HCT116 (cell line): ENCODE measurements at regions of chr13 and their contacts with region 1.

Region 1: DNA sequence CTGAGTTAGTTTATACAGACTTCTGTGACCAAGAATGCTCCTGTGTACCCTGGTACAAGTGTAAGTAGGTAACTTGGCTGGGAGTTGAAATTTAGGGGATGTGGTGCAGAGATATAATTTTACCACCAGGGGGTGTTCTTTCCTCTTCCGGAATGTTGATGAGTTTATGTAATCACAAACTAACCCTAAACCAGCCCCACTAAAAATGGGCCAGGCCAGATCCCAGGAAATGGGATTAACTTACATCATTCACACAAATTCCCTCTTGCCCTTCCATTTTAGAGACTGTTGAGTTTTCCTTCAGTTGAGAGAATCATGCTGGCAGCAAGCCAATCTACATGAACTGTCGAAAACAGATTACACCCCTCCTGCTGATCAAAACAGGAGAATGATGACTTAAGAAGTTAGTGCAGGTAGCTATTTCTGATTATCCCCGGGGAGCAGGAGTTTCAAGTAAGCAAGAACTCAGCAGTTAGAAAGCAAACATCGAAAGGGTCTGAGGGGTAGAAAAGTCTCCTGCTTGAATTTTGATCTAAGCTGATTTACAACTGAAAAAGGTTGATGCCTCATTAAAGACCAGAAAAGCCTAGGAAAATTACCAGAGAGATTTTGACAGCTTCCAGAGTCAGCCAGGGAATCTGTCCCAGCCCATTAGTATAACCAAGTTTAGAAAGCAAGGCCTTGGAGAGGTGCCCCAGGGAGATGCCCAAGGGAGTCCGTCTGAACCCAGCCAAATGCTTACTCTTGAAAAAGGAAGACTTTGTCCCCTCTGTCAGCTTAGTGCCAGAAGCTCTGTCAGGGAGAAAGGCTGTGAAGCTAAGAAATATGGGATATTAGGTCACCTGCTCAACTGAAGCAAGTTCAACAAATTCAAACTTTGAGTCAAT is 32.3 kb upstream of the MED4 start:
- DNase-seq: peak; percentile 59
- ATAC-seq: peak; percentile 87
- H3K4me3 ChIP-seq: no peak overlapping the region
- H3K27ac ChIP-seq: no peak overlapping the region
- H3K4me1 ChIP-seq: 0 out of 4 replicates have a peak, but pooled peaks cover 0 to 5% of the 10 kb centered on the region in 2 experiments
- H3K27me3 ChIP-seq: no peaks in the 10 kb centered on the region
- CTCF ChIP-seq: peak; percentile 70 to 82 (median 72)
- POLR2A ChIP-seq: no peak
- RAD21 ChIP-seq: peak; percentile 78

Region 2: GRCh38 chr13:47990920-47991466 is 136.2 kb before region 1 on chr13:
- CTCF ChIA-PET with region 1: no interaction called
- POLR2A ChIA-PET with region 1: no interaction called
- RAD21 ChIA-PET with region 1: no interaction called
- intact Hi-C with region 1: no loop called
- DNase-seq: no peak
- ATAC-seq: no peak
- H3K4me3 ChIP-seq: no peak overlapping the region
- H3K27ac ChIP-seq: no peak overlapping the region
- H3K4me1 ChIP-seq: no peaks in the 10 kb centered on the region
- H3K27me3 ChIP-seq: no peaks in the 10 kb centered on the region
- CTCF ChIP-seq: no peak
- POLR2A ChIP-seq: no peak
- RAD21 ChIP-seq: no peak

Region 3: DNA sequence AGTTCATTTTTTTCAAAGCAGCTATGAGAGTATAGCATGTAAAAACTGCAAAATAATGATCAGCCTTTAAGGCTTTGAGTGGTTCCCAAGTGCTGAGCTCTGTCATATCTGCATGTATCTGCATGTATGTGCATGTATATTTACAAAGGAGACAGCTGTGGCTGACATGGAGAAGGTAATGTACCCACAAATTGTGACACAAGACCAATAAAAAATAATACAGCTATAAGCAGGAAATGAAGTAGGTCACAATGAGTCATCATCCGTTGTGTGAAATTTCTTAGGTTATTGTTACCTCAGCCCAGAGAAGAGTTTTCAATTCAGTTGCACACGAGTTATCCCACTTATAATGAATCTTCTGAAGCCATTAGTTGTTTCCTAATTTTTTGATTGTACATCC is 28.7 kb after region 1 on chr13:
- CTCF ChIA-PET with region 1: no interaction called
- POLR2A ChIA-PET with region 1: no interaction called
- RAD21 ChIA-PET with region 1: no interaction called
- intact Hi-C with region 1: no loop called
- DNase-seq: peak; percentile 38
- ATAC-seq: peak; percentile 64
- H3K4me3 ChIP-seq: peak overlapping the region in 1 of 2 experiments; percentile 12; a peak in 1 of 4 replicates
- H3K27ac ChIP-seq: peak overlapping the region; percentile 60
- H3K4me1 ChIP-seq: peaks cover 21 to 36% of the 10 kb centered on the region in 2 experiments
- H3K27me3 ChIP-seq: no peaks in the 10 kb centered on the region
- CTCF ChIP-seq: no peak
- POLR2A ChIP-seq: no peak
- RAD21 ChIP-seq: no peak

Region 4: DNA sequence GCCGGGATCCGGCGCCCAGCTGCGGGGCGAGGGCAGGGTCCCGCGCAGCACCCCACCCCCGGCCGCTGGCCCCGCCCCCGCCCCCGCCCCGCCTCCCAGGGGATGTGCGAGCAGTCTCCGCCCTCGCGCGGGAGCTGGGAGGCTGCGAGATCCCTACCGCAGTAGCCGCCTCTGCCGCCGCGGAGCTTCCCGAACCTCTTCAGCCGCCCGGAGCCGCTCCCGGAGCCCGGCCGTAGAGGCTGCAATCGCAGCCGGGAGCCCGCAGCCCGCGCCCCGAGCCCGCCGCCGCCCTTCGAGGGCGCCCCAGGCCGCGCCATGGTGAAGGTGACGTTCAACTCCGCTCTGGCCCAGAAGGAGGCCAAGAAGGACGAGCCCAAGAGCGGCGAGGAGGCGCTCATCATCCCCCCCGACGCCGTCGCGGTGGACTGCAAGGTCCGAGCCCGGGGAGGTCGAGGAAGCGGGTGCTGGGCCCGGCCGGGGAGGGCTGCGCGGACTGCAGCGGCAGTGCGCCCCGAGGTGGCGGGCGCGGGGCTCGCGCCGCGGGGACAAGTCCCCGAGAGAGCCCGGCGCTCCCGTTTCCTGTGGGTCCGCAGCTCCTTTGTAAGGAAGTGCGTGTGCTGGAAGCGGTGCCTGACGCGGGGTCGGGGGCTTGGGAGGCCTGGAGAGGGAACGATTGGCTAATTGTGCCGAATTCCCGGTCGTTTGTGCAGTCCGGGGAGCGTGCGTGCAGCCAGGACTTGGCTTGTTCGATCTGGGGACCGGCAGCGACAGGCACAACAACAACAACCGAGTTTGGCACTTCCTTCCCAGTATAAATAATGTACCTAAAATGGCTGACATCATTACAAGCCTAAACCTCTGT is 106.1 kb after region 1 on chr13 and contains the start of gene ITM2B:
- CTCF ChIA-PET with region 1: interaction called, 5 read pairs
- POLR2A ChIA-PET with region 1: no interaction called
- RAD21 ChIA-PET with region 1: no interaction called
- intact Hi-C with region 1: loop called (anchors 1 kb)
- DNase-seq: peak; percentile 13
- ATAC-seq: peak; percentile 94
- H3K4me3 ChIP-seq: peak within 1 kb of the TSS; percentile 87 to 88
- H3K27ac ChIP-seq: peak within 1 kb of the TSS; percentile 93
- H3K4me1 ChIP-seq: peaks cover 6 to 9% of the 10 kb centered on the region in 2 experiments; a peak in 3 of 4 replicates
- H3K27me3 ChIP-seq: no peaks in the 10 kb centered on the region
- CTCF ChIP-seq: peak in 2 of 3 experiments; percentile 32 to 46; a peak in 3 of 6 replicates
- POLR2A ChIP-seq: no peak
- RAD21 ChIP-seq: peak; percentile 35
- total RNA-seq, gene ITM2B: 124 TPM